Panc1 (cell line): ENCODE measurements at regions of chr12 and their contacts with region 1.

Region 1: GRCh38 chr12:68381476-68382219 is 49.5 kb upstream of the MDM1 start:
- DNase-seq: no peak
- ATAC-seq: no peak
- H3K4me3 ChIP-seq: no peak overlapping the region
- H3K27ac ChIP-seq: peak overlapping the region; percentile 57; the same call in 1 of the 2 replicates
- H3K4me1 ChIP-seq: peaks cover 6% of the 10 kb centered on the region
- H3K27me3 ChIP-seq: no peaks in the 10 kb centered on the region
- CTCF ChIP-seq: no peak

Region 2: DNA sequence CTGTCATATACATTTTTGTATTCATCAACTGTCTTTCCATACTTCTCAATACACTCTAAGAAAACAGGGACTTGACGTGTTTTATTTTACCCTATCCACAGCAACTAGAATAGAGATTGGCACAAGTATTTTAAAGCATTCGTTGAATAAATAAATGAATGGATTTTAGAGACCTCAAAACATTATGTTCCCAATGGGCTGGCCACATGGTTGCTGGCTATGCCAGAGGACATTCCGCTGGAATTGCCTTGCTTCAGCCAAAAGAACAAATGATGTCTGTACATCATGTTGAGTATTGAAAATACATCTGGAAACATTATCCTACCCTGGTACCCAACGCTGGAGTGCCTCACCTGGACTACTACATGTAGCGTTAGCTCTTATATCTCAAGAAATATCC is 96.3 kb after region 1 on chr12:
- CTCF ChIA-PET with region 1: no interaction called
- POLR2A ChIA-PET with region 1: interaction called, 13 read pairs
- in situ Hi-C with region 1: no loop called
- intact Hi-C with region 1: no loop called
- DNase-seq: no peak
- ATAC-seq: no peak
- H3K4me3 ChIP-seq: no peak overlapping the region
- H3K27ac ChIP-seq: peak overlapping the region; percentile 60; the same call in 1 of the 2 replicates
- H3K4me1 ChIP-seq: peaks cover 12% of the 10 kb centered on the region
- H3K27me3 ChIP-seq: no peaks in the 10 kb centered on the region
- CTCF ChIP-seq: no peak